ENCODE measurements at regions of chr10 and their contacts with region 1.

Region 1: DNA sequence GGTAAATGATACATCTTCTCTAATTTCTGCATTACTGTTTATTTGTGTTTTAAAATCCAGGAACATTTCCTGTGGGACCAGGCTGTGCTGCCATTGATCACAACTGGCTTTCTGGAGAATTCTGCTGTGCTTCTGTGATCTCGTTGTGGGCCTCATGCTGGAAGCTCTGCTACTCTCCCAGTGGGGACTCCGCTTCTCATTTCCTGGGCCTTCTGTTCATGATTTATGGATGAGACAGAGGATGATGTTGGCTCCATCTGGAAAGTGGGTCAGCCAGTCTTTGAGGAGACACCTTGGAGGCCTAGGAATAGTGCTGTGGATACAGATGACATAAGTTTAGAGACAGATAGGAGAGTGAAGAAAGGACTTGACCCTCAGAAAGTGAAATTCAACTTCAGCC is 15.2 kb upstream of the GPR158 start:
- DNase-seq: no peak
- H3K4me3 ChIP-seq: no peak overlapping the region
- H3K4me3 Mint-ChIP-seq: no peak overlapping the region
- H3K27ac Mint-ChIP-seq: no peak overlapping the region
- H3K4me1 ChIP-seq: no peaks in the 10 kb centered on the region
- H3K4me1 Mint-ChIP-seq: no peaks in the 10 kb centered on the region
- H3K27me3 ChIP-seq: no peaks in the 10 kb centered on the region; the same call in 1 of the 2 replicates
- H3K27me3 Mint-ChIP-seq: peaks cover 2% of the 10 kb centered on the region
- CTCF ChIP-seq: no peak

Region 2: DNA sequence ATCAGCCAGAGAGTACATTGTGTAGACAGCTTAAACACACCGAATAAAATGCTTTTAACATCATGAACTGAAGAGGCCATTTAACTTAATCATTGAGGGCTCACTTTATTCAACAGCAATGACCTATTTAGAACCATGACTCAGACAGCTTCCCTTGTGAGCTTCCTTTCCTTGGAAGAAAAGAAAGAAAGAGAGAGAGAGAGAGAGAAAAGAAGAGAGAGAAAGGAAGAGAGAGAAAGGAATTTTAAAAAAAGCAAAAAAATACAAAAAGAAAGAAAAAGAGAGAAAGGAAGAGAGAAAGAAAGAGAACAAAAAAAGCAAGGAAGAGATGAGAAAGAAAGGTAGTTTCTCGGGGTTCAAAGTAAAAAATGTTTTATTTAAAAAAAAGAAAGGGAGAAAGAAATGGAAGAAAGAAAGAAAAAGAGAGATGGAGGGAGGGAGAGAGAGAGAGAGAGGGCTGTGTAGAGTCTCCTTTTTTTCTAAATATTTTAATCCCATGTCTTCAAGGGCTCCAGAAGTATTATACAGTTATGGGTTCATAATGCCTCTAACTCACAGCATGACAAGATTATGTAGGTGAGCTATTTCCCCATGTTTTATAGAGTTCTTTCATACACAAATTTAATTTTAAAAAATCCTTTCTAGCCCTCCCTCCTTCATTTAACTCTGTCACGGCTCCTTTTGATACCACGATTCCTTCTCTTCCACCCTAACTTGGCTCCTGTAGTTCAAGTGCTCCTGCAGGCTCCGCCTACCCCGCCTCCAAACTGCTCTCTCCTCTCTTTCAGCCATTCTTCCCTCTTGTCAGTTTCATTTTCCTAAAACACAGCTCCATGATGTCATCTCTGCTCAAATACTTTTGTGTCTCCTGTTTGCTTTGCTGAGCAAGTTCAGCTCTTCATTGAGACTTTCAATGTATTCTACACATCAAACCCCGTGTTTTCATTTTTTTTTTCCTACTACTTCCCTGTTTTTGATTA is 292.7 kb before region 1 on chr10:
- CTCF ChIA-PET with region 1: no interaction called
- POLR2A ChIA-PET with region 1: no interaction called
- intact Hi-C with region 1: no loop called
- DNase-seq: peak in 1 of 2 experiments; percentile 36
- H3K4me3 ChIP-seq: no peak overlapping the region
- H3K4me3 Mint-ChIP-seq: no peak overlapping the region
- H3K27ac Mint-ChIP-seq: no peak overlapping the region
- H3K4me1 ChIP-seq: no peaks in the 10 kb centered on the region
- H3K4me1 Mint-ChIP-seq: peaks cover 8% of the 10 kb centered on the region
- H3K27me3 ChIP-seq: no peaks in the 10 kb centered on the region
- H3K27me3 Mint-ChIP-seq: no peaks in the 10 kb centered on the region
- CTCF ChIP-seq: no peak

Region 3: GRCh38 chr10:25130906-25131305 is 28.7 kb before region 1 on chr10:
- CTCF ChIA-PET with region 1: no interaction called
- POLR2A ChIA-PET with region 1: no interaction called
- intact Hi-C with region 1: no loop called
- DNase-seq: no peak
- H3K4me3 ChIP-seq: no peak overlapping the region
- H3K4me3 Mint-ChIP-seq: no peak overlapping the region
- H3K27ac Mint-ChIP-seq: no peak overlapping the region
- H3K4me1 ChIP-seq: no peaks in the 10 kb centered on the region
- H3K4me1 Mint-ChIP-seq: no peaks in the 10 kb centered on the region
- H3K27me3 ChIP-seq: no peaks in the 10 kb centered on the region
- H3K27me3 Mint-ChIP-seq: peaks cover 8% of the 10 kb centered on the region
- CTCF ChIP-seq: no peak

Region 4: DNA sequence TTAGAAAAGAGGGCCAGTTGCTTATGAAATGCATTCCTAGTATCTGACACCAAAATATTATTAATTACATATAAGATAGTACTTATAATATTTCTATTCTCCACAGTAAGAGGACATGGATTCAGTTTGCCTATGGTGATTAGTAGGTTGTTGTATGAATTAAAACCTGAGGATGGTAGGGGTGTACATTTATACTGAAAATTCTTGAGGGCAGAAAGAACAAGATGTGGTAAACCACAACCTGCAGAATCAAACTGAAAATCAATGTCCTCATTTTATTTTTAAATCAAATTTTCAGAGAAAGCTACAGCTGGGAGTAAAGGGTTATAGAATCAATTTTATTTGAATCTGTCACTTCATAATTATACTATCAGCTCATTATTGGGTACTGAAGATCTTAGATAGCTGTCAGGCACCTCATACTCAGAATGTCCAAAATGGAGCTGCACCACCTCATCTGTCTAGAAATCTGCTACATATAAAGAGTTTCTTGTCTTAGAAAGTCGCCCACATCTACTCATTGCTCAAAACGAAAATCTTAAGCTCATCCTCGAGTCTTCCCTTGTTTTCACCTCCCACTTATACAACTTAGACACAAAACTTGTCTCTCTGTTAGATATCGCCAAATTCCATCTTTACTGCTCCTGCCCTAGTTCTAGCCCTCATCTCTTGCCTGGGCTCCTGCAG is 839.8 kb after region 1 on chr10:
- CTCF ChIA-PET with region 1: interaction called, 11 read pairs
- POLR2A ChIA-PET with region 1: no interaction called
- intact Hi-C with region 1: no loop called
- DNase-seq: no peak
- H3K4me3 ChIP-seq: no peak overlapping the region
- H3K4me3 Mint-ChIP-seq: no peak overlapping the region
- H3K27ac Mint-ChIP-seq: no peak overlapping the region
- H3K4me1 ChIP-seq: no peaks in the 10 kb centered on the region
- H3K4me1 Mint-ChIP-seq: no peaks in the 10 kb centered on the region
- H3K27me3 ChIP-seq: no peaks in the 10 kb centered on the region
- H3K27me3 Mint-ChIP-seq: peaks cover 8% of the 10 kb centered on the region
- CTCF ChIP-seq: no peak

Measured in Caco-2 (cell line).